ENCODE measurements at regions of chr9 and their contacts with region 1.

Region 1: GRCh38 chr9:95875305-95876137 is at the start of gene ERCC6L2:
- DNase-seq: peak; percentile 99
- total RNA-seq, gene ERCC6L2: 42.7 to 47.7 TPM

Region 2: DNA sequence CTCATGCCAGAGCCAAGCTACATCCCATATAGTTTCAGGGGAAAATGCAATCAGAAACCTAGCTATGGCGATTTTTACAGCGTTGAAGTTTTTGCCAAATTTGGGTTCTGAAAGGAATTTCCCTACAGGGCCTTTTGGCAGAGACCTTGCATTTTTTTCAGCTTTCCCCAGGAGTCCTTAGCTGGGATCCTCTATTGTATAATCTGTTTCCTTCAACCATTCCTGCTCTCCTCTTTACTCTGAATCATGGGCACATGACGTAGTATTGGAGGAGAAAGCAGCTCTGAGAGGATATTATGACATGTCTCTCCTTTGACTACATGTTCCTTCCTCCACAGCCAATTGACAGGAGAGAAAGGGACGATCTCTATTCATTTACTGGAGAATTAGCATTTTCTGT is 118.5 kb before region 1 on chr9:
- intact Hi-C with region 1: loop called in 1 of 2 experiments (anchors 10 kb)
- DNase-seq: no peak

Measured in posterior vena cava (tissue), 2 donors.